IMR-90 (cell line): ENCODE measurements at regions of chr2 and their contacts with region 1.

Region 1: GRCh38 chr2:46876741-46877384 is 38.7 kb downstream of the MCFD2 start:
- DNase-seq: peak; percentile 88
- ATAC-seq: peak; percentile 10
- H3K4me3 ChIP-seq: no peak overlapping the region
- H3K27ac ChIP-seq: peak overlapping the region; percentile 72
- H3K4me1 ChIP-seq: peaks cover 49% of the 10 kb centered on the region
- H3K27me3 ChIP-seq: no peaks in the 10 kb centered on the region
- CTCF ChIP-seq: peak; percentile 71
- POLR2A ChIP-seq: no peak
- RAD21 ChIP-seq: peak; percentile 77

Region 2: DNA sequence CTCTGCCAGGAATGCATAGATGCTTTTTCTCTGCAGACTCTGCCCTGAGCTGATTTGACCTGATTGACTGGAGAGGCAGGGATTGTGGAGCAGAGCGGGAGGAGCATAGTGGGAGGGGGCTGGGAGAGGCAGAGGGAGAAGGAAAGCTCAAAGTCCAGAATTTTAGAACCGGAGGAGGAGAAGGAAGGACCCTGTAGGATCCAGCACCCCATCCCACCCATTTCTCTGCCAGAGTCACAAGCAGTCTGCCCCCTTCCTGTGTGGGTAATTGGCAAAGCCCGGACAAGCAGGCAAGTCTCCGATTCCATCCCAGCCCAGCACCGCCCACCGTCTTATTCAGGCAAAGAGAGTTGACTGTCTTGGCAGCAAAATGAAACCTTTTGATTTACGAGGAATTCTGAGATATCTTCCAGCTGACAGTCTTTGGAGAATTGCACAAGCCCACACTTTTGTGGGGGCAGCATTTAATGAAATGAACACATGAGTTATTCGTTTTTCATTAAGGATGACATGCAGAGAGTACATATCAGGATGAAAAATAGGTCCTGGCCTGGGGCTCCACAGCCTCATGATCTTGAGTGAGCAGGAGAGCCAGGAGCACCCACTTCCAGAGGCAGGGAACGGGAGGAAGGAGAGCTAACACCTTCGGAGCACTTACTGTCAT is 64.4 kb before region 1 on chr2:
- CTCF ChIA-PET with region 1: no interaction called
- POLR2A ChIA-PET with region 1: no interaction called
- dilution Hi-C with region 1: no loop called
- in situ Hi-C with region 1: no loop called
- intact Hi-C with region 1: loop called (anchors 5 kb)
- DNase-seq: peak; percentile 96
- ATAC-seq: peak; percentile 90
- H3K4me3 ChIP-seq: no peak overlapping the region
- H3K27ac ChIP-seq: peak overlapping the region; percentile 73
- H3K4me1 ChIP-seq: peaks cover 26% of the 10 kb centered on the region
- H3K27me3 ChIP-seq: no peaks in the 10 kb centered on the region
- CTCF ChIP-seq: no peak
- POLR2A ChIP-seq: no peak
- RAD21 ChIP-seq: peak; percentile 29

Region 3: DNA sequence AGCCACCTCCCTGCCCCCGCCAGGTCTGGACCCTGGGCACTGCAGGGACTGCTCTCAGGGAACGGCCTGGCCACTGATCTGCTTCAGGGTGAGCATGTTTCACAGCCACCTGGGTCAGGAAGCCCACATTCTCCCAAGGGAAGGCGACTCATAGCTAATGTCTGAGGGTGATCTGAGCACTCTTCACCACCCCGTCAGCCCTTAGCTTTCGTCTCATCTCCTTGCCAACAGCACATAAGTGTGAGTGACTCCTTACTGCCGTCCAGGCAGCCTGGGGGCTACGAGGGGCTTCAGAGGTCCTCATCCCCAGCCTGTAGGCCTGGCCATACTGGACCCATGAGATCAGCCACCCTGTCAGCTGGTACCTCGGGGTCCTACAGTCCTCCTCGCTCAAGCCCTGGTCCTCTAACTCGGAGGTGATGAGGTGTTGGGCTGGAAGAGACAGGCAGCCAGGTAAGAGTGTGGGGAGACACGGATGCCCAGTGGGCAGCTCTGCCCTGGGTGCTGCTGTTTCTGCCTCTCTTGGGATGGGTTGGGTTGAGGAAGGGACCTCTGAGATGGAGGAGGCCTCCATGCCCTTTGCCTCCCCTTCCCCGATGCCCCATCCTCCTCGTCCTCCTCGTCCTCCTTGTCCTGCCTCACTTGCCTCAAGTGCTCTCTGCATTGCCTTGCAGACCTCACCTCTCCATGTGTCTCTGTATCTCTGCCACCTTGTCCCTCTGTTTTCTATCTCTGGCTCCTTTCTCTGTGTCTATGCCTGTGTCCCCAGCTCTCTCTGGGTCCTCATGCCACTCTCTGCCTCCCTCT is 49.0 kb before region 1 on chr2:
- CTCF ChIA-PET with region 1: interaction called, 3 read pairs
- POLR2A ChIA-PET with region 1: no interaction called
- dilution Hi-C with region 1: no loop called
- in situ Hi-C with region 1: no loop called
- intact Hi-C with region 1: loop called (anchors 2 kb)
- DNase-seq: peak; percentile 81
- ATAC-seq: no peak; the same call in 1 of the 2 replicates
- H3K4me3 ChIP-seq: no peak overlapping the region
- H3K27ac ChIP-seq: peak overlapping the region; percentile 25
- H3K4me1 ChIP-seq: peaks cover 44% of the 10 kb centered on the region
- H3K27me3 ChIP-seq: no peaks in the 10 kb centered on the region
- CTCF ChIP-seq: no peak
- POLR2A ChIP-seq: no peak
- RAD21 ChIP-seq: no peak

Region 4: GRCh38 chr2:47129191-47129706 is 252.4 kb after region 1 on chr2:
- CTCF ChIA-PET with region 1: no interaction called
- POLR2A ChIA-PET with region 1: no interaction called
- dilution Hi-C with region 1: no loop called
- in situ Hi-C with region 1: no loop called
- intact Hi-C with region 1: no loop called
- DNase-seq: no peak
- ATAC-seq: no peak
- H3K4me3 ChIP-seq: no peak overlapping the region
- H3K27ac ChIP-seq: no peak overlapping the region
- H3K4me1 ChIP-seq: no peaks in the 10 kb centered on the region
- H3K27me3 ChIP-seq: no peaks in the 10 kb centered on the region
- CTCF ChIP-seq: no peak
- POLR2A ChIP-seq: no peak
- RAD21 ChIP-seq: no peak